HCT116 (cell line): ENCODE measurements at regions of chr14 and their contacts with region 1.

Region 1: DNA sequence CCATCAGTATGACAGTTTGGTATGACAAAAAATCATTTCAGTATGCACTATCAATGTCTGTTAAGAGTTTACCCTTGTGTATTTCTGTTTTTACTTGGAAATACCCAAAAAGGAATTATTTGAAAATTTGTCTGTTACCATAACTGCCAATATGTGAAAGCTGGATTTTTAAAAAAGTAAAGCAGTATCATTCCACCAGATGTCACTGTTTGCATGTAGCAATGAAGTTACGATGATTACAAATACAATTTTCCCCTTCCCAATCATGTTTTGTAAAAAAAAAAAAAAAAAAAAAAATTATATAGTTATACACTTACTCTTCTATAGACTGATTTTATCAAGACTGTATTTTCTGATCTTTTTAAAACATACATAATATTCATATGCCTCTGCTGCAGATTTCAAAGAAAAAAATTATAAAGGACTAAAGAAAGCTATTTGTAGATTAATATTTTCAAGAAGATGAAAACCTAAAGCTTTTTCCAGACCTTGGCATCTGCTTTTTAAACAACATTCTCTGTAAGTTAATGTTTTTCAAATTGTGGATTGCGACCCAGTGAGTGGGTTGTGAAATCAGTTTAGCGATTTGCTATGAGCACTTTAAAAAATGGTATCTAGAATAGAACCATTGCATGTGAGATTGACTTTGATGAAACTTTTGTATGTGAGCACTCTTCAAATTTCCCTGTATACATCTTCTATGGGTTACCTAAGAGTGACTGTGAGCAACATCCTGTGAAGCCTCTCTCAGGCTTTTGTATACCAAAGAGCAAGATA is 114.2 kb downstream of the TTC6 start:
- DNase-seq: peak; percentile 16
- ATAC-seq: no peak
- H3K4me3 ChIP-seq: no peak overlapping the region
- H3K27ac ChIP-seq: no peak overlapping the region
- H3K4me1 ChIP-seq: no peaks in the 10 kb centered on the region
- H3K27me3 ChIP-seq: no peaks in the 10 kb centered on the region
- CTCF ChIP-seq: peak; percentile 39 to 52 (median 40); a peak in 3 of 6 replicates
- POLR2A ChIP-seq: no peak
- RAD21 ChIP-seq: peak; percentile 61

Region 2: GRCh38 chr14:37698840-37699777 is 10.5 kb before region 1 on chr14:
- CTCF ChIA-PET with region 1: interaction called, 13 read pairs
- POLR2A ChIA-PET with region 1: no interaction called
- RAD21 ChIA-PET with region 1: no interaction called
- intact Hi-C with region 1: no loop called
- DNase-seq: no peak
- ATAC-seq: no peak
- H3K4me3 ChIP-seq: no peak overlapping the region
- H3K27ac ChIP-seq: no peak overlapping the region
- H3K4me1 ChIP-seq: peaks cover 0 to 6% of the 10 kb centered on the region in 2 experiments; a peak in 1 of 4 replicates
- H3K27me3 ChIP-seq: no peaks in the 10 kb centered on the region
- CTCF ChIP-seq: no peak
- POLR2A ChIP-seq: no peak
- RAD21 ChIP-seq: no peak

Region 3: DNA sequence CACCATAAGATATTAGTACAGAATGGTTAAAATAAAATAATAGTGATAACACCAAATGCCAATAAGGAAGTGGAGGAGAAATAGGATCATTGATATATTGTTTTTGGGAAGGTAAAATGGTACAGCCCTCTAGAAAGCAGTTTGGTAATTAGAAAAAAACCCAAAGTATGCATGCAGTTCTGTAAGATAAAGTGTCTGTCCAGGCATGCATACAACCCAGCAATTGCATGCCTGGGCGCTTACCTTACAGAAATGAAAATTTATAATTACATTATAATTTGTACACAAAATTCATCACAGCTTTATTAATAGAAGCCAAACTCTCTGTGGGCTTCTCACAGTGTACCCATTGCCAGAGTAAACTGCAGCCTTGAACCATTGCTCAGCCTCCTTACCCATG is 10.5 kb after region 1 on chr14:
- CTCF ChIA-PET with region 1: interaction called, 10 read pairs
- POLR2A ChIA-PET with region 1: no interaction called
- RAD21 ChIA-PET with region 1: no interaction called
- intact Hi-C with region 1: no loop called
- DNase-seq: no peak
- ATAC-seq: no peak
- H3K4me3 ChIP-seq: no peak overlapping the region
- H3K27ac ChIP-seq: no peak overlapping the region
- H3K4me1 ChIP-seq: no peaks in the 10 kb centered on the region
- H3K27me3 ChIP-seq: no peaks in the 10 kb centered on the region
- CTCF ChIP-seq: no peak
- POLR2A ChIP-seq: no peak
- RAD21 ChIP-seq: no peak

Region 4: DNA sequence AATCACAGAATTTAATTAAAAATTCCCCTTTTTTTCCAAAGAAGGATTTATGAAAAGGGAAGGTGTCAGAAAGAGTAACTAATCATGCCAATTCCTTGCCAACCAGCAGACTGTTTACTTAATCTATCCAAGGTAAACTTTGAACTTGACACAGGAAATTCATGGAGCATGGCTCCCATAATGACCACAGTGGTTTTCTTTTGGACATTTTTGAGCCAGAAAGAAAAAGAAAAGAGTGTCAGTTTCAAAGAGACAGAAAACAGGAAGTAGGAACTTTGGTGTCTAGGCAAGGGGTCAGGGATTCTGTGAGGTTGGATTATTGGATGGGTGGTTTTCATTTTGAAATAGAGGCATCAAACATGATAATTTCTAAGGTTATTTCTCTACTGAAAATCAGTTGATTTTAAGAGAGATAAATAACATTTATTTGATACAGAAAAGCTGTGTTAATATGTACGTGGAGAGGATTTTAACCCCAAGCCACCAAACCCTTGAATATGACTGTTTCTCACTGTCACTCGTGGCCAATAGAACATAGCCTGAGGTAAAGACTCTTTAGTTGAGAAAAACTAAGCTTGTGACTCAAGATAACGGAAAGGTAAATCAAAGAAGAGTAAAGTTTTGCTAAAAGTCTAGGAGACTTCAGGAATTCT is 81.9 kb after region 1 on chr14:
- CTCF ChIA-PET with region 1: no interaction called
- POLR2A ChIA-PET with region 1: no interaction called
- RAD21 ChIA-PET with region 1: no interaction called
- intact Hi-C with region 1: no loop called
- DNase-seq: no peak
- ATAC-seq: no peak
- H3K4me3 ChIP-seq: no peak overlapping the region
- H3K27ac ChIP-seq: no peak overlapping the region
- H3K4me1 ChIP-seq: no peaks in the 10 kb centered on the region
- H3K27me3 ChIP-seq: 0 out of 2 replicates have a peak, but pooled peaks cover 4% of the 10 kb centered on the region
- CTCF ChIP-seq: no peak
- POLR2A ChIP-seq: no peak
- RAD21 ChIP-seq: no peak

Region 5: GRCh38 chr14:37874429-37875191 is 165.0 kb after region 1 on chr14:
- CTCF ChIA-PET with region 1: interaction called, 65 read pairs
- POLR2A ChIA-PET with region 1: no interaction called
- RAD21 ChIA-PET with region 1: interaction called, 10 to 11 read pairs
- intact Hi-C with region 1: loop called (anchors 1 kb)
- DNase-seq: peak; percentile 57
- ATAC-seq: peak; percentile 96
- H3K4me3 ChIP-seq: no peak overlapping the region
- H3K27ac ChIP-seq: no peak overlapping the region
- H3K4me1 ChIP-seq: peaks cover 0 to 4% of the 10 kb centered on the region in 2 experiments; a peak in 3 of 4 replicates
- H3K27me3 ChIP-seq: no peaks in the 10 kb centered on the region
- CTCF ChIP-seq: peak; percentile 52 to 94 (median 87); a peak in 5 of 6 replicates
- POLR2A ChIP-seq: no peak
- RAD21 ChIP-seq: peak; percentile 82